ENCODE measurements at regions of chr12 and their contacts with region 1.

Region 1: GRCh38 chr12:2535583-2536204 is 259.1 kb upstream of the FKBP4 start:
- DNase-seq: no peak
- H3K4me3 ChIP-seq: no peak overlapping the region
- CTCF ChIP-seq: no peak
- POLR2A ChIP-seq: no peak

Region 2: DNA sequence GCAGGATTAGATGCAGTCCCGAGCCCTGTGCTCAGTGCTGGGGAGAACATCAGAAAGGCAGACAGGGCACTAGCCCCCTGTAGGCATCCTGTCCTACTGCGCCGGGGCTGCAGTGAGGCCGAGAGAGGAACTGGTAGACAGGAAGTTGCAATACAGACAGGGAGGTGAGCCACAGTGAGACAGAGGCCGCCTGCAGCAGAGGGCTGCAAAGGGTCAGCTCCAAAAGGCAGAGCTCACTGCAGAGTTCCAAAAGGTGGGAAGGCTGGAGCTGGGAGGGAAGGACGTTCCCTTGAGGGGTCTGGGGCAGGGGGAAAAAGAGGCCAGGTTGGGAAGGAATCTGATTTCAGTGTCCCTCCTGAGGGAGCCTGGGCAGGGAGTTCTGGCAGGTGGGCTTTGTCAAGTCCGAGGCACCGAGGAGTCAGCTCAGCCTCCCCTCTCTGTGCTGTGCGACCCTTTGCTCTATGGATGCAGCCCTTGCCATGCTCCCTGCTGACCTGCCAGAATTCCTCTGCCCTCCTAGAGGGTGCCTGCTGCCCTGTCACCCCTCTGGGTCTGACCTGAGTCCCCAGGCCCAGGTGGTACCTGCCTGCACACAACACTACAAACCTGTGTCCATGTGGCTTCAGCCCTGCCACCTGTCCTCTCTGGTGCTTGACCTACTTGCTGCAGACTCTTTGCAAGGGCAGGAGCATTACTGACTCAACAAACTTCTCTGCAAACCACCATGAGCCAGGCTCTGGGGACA is 1018.8 kb after region 1 on chr12:
- intact Hi-C with region 1: loop called (anchors 5 kb)
- DNase-seq: peak in 1 of 2 donors; percentile 67
- H3K4me3 ChIP-seq: no peak overlapping the region
- CTCF ChIP-seq: no peak
- POLR2A ChIP-seq: no peak

Measured in lower leg skin (tissue), 4 donors.